ENCODE measurements at regions of chr9 and their contacts with region 1.

Region 1: DNA sequence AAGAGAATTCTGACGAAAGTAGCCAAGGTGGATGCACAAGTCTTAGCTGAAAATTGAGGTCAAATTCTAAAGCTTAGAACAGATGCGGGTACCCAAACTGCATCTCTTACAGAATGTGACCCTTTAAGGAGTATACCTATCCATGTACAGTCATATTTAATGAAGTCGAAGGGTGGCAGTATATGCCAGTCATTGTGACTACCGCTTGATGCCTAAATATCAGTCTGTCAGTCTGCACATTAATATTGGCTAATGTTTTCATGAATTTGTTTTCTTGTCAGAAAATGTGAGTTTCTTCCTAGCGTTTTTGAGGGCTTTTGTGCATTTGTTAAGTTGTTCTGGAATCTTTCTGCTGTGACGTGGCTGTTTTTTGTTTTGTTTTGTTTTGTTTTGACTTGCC is 264.5 kb upstream of the ELAVL2 start:
- DNase-seq: no peak
- ATAC-seq: no peak
- H3K4me3 ChIP-seq: no peak overlapping the region
- H3K27ac ChIP-seq: no peak overlapping the region
- H3K4me1 ChIP-seq: no peaks in the 10 kb centered on the region
- H3K27me3 ChIP-seq: no peaks in the 10 kb centered on the region
- CTCF ChIP-seq: no peak
- EP300 ChIP-seq: no peak
- POLR2A ChIP-seq: no peak
- RAD21 ChIP-seq: no peak

Region 2: DNA sequence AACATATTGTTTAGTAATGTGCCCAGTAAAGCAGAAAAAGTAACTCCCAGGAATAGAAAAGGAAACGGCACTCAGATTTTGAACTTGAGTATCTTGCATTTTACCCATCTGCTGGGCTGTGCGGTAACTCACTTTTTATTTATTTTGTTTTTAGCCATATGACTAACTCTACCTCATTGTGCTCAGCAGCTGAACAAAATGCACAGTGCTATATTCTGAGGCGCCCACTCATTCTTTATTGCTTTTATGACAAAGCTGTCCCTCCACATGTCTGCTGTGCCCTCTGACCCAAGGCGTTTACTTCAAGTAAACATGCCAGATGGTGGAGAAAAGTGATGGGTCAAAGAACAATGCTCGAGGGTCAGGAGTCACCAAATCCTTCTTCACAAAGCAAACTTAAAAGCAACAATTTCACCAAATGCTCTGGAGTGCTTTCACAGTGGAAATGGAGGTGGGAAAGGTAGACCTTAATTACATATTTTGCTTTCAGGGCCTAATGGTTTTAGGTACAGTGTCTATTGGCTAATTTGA is 49.3 kb before region 1 on chr9:
- CTCF ChIA-PET with region 1: no interaction called
- POLR2A ChIA-PET with region 1: no interaction called
- in situ Hi-C with region 1: no loop called
- intact Hi-C with region 1: no loop called
- DNase-seq: no peak
- ATAC-seq: no peak
- H3K4me3 ChIP-seq: no peak overlapping the region
- H3K27ac ChIP-seq: no peak overlapping the region
- H3K4me1 ChIP-seq: no peaks in the 10 kb centered on the region
- H3K27me3 ChIP-seq: no peaks in the 10 kb centered on the region
- CTCF ChIP-seq: no peak
- EP300 ChIP-seq: no peak
- POLR2A ChIP-seq: no peak
- RAD21 ChIP-seq: no peak

Region 3: GRCh38 chr9:24738421-24738961 is 647.9 kb after region 1 on chr9:
- CTCF ChIA-PET with region 1: no interaction called
- POLR2A ChIA-PET with region 1: no interaction called
- in situ Hi-C with region 1: no loop called
- intact Hi-C with region 1: no loop called
- DNase-seq: no peak
- ATAC-seq: no peak
- H3K4me3 ChIP-seq: no peak overlapping the region
- H3K27ac ChIP-seq: no peak overlapping the region
- H3K4me1 ChIP-seq: no peaks in the 10 kb centered on the region
- H3K27me3 ChIP-seq: no peaks in the 10 kb centered on the region
- CTCF ChIP-seq: no peak
- EP300 ChIP-seq: no peak
- POLR2A ChIP-seq: no peak
- RAD21 ChIP-seq: no peak

Region 4: GRCh38 chr9:24832308-24832707 is 741.7 kb after region 1 on chr9:
- CTCF ChIA-PET with region 1: no interaction called
- POLR2A ChIA-PET with region 1: no interaction called
- in situ Hi-C with region 1: no loop called
- intact Hi-C with region 1: loop called (anchors 5 kb)
- DNase-seq: peak; percentile 3
- ATAC-seq: no peak
- H3K4me3 ChIP-seq: no peak overlapping the region
- H3K27ac ChIP-seq: no peak overlapping the region
- H3K4me1 ChIP-seq: no peaks in the 10 kb centered on the region
- H3K27me3 ChIP-seq: no peaks in the 10 kb centered on the region
- CTCF ChIP-seq: no peak
- EP300 ChIP-seq: no peak
- POLR2A ChIP-seq: no peak
- RAD21 ChIP-seq: no peak

Measured in HepG2 (cell line).